ENCODE measurements at regions of chr6 and their contacts with region 1.

Region 1: GRCh38 chr6:157184202-157185020 is 138.9 kb downstream of the TMEM242 start:
- DNase-seq: peak; percentile 85 to 88 (median 88)
- ATAC-seq: peak; percentile 99
- H3K4me3 ChIP-seq: no peak overlapping the region
- H3K27ac ChIP-seq: no peak overlapping the region
- H3K4me1 ChIP-seq: peaks cover 0 to 6% of the 10 kb centered on the region in 2 experiments; a peak in 3 of 5 replicates
- H3K27me3 ChIP-seq: no peaks in the 10 kb centered on the region
- CTCF ChIP-seq: peak; percentile 96 to 97 (median 97)
- EP300 ChIP-seq: 0 out of 2 replicates have a peak, but pooled peaks have one; percentile 15
- POLR2A ChIP-seq: no peak
- RAD21 ChIP-seq: peak; percentile 90 to 94

Region 2: DNA sequence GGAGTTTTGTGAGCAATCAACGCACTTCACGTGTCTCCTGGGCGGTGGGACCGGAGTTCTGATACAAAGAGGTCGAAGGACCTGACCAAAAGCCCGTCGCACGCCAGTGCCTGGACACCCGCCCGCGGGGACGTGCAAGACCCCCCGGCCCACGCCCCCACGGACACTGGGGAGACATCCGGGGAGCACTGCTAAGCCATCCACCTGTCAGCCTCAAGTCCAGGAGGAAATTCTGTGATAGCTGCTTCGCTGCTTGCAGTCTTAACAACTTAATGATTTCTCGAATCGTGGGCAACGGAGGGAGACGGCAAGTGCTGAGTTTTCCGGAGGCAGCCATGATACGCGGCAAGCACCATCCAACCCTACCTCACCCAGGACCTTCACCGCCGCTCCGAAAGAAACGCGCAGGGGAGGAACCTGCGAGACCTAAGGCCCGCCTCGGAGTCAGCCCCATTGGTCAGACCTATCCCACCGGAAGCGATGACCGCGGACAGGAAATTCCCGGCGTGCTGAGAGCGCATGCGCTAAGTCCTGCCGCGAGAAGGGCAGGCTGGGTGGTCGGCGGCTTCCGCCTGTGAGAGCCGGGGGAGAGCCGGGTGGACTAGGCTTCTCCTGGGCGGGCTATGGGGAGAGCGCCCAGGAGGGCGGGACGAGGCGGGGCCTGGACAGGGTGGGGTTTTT is 1870.2 kb before region 1 on chr6 and contains the start of gene TFB1M:
- CTCF ChIA-PET with region 1: no interaction called
- POLR2A ChIA-PET with region 1: no interaction called
- in situ Hi-C with region 1: loop called (anchors 25 kb)
- intact Hi-C with region 1: no loop called
- DNase-seq: peak; percentile 95 to 100 (median 96)
- ATAC-seq: peak; percentile 98
- H3K4me3 ChIP-seq: peak within 1 kb of the TSS; percentile 88
- H3K27ac ChIP-seq: peak within 1 kb of the TSS; percentile 94
- H3K4me1 ChIP-seq: peaks cover 4 to 7% of the 10 kb centered on the region in 2 experiments; a peak in 3 of 5 replicates
- H3K27me3 ChIP-seq: no peaks in the 10 kb centered on the region
- CTCF ChIP-seq: 0 out of 6 replicates have a peak, but pooled peaks of 1 of the 3 experiments have one; percentile 2
- EP300 ChIP-seq: 0 out of 2 replicates have a peak, but pooled peaks have one; percentile 5
- POLR2A ChIP-seq: peak; percentile 96
- RAD21 ChIP-seq: no peak
- polyA plus RNA-seq, gene TFB1M: 129 to 145 TPM

Region 3: DNA sequence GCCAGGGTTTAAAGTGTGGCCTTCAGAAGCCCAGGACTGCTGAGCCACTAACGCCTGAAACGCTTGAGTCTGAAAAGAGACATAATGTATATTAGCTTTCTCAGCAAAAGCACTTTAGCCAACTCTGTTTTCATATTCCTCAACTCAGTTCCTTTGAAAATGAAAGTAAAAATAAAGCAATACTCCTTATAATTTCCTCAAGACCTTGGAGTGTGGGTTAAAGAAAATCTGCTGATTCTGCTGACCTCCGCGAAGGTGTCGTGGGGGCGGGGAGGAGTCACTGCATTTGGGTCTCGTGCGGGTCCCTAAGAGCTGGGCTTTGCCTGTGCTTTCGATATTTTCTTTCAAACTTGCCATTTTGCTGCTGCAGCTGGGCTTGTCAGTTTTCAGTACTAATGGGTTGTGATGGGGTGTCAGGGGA is 549.5 kb before region 1 on chr6:
- CTCF ChIA-PET with region 1: no interaction called
- POLR2A ChIA-PET with region 1: no interaction called
- in situ Hi-C with region 1: no loop called
- intact Hi-C with region 1: no loop called
- DNase-seq: no peak
- ATAC-seq: no peak
- H3K4me3 ChIP-seq: no peak overlapping the region
- H3K27ac ChIP-seq: no peak overlapping the region
- H3K4me1 ChIP-seq: peaks cover 0 to 5% of the 10 kb centered on the region in 2 experiments; a peak in 1 of 5 replicates
- H3K27me3 ChIP-seq: peaks cover 25 to 33% of the 10 kb centered on the region in 2 experiments
- CTCF ChIP-seq: no peak
- EP300 ChIP-seq: no peak
- POLR2A ChIP-seq: no peak
- RAD21 ChIP-seq: no peak

Measured in K562 (cell line).